Activated T-helper 1 cell treated with anti-CD3 and anti-CD28 coated beads, Interleukin-12 subunit alpha, Interleukin-12 subunit beta, Interleukin-2, Interleukin-4 antibody, amounts not matched to agents 30 ng/mL and 10 ng/mL and 1 ng/mL, durations not matched to agents 14 hours and 24 hours and 36 hours (primary cell): ENCODE measurements at regions of chr1 and their contacts with region 1.

Region 1: DNA sequence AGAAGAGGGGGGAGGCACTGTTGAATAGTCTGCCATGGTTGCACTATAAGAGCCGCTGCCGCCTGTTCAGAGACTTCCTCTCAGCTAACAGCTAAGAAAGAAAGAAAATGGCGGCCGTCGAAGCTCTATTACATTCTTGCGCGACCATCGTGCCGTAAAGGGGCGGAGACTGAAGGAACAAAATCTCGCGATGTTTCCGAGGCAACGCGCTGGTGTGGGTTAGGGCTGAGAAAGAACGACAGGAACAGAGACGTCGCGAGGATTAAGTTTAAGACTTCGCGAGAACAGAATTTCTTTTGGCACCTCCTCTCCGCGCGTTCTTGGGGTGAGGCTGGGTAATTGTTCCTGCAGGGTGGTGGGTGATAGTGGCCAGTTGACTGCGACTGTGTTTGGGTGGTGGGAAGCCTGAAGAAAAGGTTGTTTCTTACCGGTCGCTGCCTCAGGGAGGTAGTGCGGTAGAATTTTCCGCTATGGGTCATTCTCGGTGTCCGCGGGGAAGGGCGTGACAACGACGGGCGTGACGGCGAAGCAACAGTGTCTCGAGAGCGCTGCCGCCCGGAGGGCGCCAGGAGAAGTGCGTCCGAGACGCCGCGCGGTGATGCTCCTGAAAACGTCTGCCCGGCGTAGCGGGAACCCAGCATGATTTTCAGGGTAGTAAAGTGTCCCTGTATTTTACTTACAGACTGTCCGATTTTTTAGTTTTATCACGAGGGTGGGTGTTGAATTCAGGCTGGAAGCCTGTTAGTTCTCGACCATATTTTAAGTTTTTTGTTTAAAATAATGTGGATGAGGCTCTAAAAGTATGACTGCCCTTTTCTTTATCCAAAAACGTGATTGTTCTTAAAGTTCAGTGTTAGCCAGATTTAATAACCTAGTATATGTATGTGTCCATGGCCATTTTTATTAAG is at the start of gene FUBP1:
- DNase-seq: peak; percentile 96
- H3K4me3 Mint-ChIP-seq: no peak within 1 kb of the TSS
- H3K27ac Mint-ChIP-seq: no peak within 1 kb of the TSS
- H3K4me1 Mint-ChIP-seq: peaks cover 52% of the 10 kb centered on the region
- H3K27me3 Mint-ChIP-seq: no peaks in the 10 kb centered on the region
- total RNA-seq, gene FUBP1: 268 and 278 TPM in 2 replicates

Region 2: GRCh38 chr1:76269155-76269554 is 1710.1 kb before region 1 on chr1:
- intact Hi-C with region 1: loop called (anchors 10 kb)
- DNase-seq: no peak
- H3K4me3 Mint-ChIP-seq: peak overlapping the region; percentile 48
- H3K27ac Mint-ChIP-seq: peak overlapping the region; percentile 77
- H3K4me1 Mint-ChIP-seq: peaks cover 71% of the 10 kb centered on the region
- H3K27me3 Mint-ChIP-seq: no peaks in the 10 kb centered on the region

Region 3: GRCh38 chr1:77282866-77283539 is 696.2 kb before region 1 on chr1:
- intact Hi-C with region 1: no loop called
- DNase-seq: no peak
- H3K4me3 Mint-ChIP-seq: peak overlapping the region; percentile 59
- H3K27ac Mint-ChIP-seq: no peak overlapping the region
- H3K4me1 Mint-ChIP-seq: peaks cover 28% of the 10 kb centered on the region
- H3K27me3 Mint-ChIP-seq: peaks cover 20% of the 10 kb centered on the region

Region 4: GRCh38 chr1:77759071-77760028 is 219.9 kb before region 1 on chr1 and contains the start of gene USP33:
- intact Hi-C with region 1: loop called (anchors 1 kb)
- DNase-seq: peak; percentile 89
- H3K4me3 Mint-ChIP-seq: peak within 1 kb of the TSS; percentile 92
- H3K27ac Mint-ChIP-seq: peak within 1 kb of the TSS; percentile 88
- H3K4me1 Mint-ChIP-seq: peaks cover 28% of the 10 kb centered on the region
- H3K27me3 Mint-ChIP-seq: peaks cover 2% of the 10 kb centered on the region
- total RNA-seq, gene USP33: 49.9 and 53.1 TPM in 2 replicates

Region 5: DNA sequence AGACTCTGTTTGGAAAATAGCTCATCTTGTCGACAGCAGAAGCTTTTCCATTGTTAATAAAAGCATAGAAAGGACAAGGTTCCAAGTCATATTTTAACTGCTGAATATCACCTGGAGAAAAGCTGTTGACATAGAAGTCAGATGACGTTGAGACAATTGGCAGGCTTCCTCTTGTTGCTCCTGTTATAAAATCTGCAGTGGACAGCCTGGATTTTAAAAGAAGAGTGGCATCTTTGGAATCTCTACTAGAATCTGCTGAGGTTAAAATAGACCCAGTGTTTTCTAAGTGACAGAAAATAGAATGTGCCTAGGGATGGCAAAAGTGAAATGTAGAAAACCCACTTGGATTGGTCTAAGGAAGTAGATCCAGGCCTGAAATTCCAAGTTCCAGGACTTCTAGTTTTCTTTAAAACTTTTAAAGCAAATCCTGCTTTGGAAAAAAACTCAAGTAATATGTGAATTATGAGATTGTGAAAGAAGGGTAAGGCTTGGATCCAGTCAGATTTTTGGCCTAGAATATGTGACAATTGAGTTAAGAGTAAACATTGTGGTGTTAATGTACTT is 144.4 kb before region 1 on chr1:
- intact Hi-C with region 1: no loop called
- DNase-seq: no peak
- H3K4me3 Mint-ChIP-seq: no peak overlapping the region
- H3K27ac Mint-ChIP-seq: no peak overlapping the region
- H3K4me1 Mint-ChIP-seq: no peaks in the 10 kb centered on the region
- H3K27me3 Mint-ChIP-seq: no peaks in the 10 kb centered on the region

Region 6: DNA sequence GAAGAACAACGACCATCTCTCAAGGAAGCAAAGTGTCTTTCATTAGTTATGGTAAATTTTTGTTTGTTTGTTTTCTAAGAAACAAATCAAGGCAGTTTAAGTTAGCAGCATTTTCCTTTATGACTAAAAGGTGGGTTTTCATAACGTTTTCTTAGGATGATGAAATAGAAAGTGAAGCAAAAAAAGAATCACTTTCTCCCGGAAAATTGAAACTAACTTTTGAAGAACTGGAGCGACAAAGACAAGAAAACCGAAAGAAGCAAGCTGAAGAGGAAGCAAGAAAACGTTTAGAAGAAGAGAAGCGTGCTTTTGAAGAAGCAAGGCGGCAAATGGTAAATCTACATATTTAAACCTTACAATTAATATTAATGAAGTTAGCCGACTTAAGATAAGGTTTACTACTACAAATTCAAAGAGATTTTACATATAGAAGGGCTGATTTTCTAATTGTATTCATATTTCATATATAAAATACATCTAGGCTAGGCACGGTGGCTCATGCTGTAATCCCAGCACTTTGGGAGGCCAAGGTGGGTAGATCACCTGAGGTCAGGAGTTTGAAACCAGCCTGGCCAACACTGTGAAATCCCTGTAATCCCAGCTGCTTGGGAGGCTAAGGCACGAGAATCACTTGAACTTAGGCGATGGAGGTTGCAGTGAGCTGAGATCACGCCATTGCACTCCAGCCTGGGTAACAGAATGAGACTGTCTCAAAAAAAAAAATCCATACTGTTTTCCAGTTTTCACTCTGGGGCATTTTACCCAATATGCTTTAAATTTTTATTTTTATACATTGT is 52.5 kb before region 1 on chr1:
- intact Hi-C with region 1: loop called (anchors 2 kb)
- DNase-seq: no peak
- H3K4me3 Mint-ChIP-seq: peak overlapping the region; percentile 68
- H3K27ac Mint-ChIP-seq: peak overlapping the region; percentile 41
- H3K4me1 Mint-ChIP-seq: peaks cover 5% of the 10 kb centered on the region
- H3K27me3 Mint-ChIP-seq: peaks cover 1% of the 10 kb centered on the region

Region 7: DNA sequence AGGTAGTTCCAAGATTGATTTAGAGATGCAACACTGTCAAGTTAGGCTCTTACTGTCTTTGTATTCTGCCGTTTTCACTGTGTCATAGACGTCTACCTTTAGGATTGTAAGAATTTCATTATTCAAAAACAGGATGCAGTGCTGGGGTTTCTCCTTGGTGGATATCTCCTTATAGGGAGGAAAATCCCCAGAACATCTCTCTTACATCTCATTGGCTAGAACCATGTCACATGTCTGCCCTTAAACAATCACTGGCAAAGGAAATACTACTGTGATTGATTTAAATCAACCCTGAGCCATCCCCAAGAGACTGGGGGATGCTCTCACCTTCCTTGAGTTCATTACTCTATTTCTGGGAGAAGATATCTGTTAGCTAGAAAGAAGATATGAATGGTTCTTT is 10.5 kb after region 1 on chr1:
- intact Hi-C with region 1: loop called (anchors 1 kb)
- DNase-seq: no peak
- H3K4me3 Mint-ChIP-seq: no peak overlapping the region
- H3K27ac Mint-ChIP-seq: no peak overlapping the region
- H3K4me1 Mint-ChIP-seq: peaks cover 31% of the 10 kb centered on the region
- H3K27me3 Mint-ChIP-seq: no peaks in the 10 kb centered on the region

Region 8: DNA sequence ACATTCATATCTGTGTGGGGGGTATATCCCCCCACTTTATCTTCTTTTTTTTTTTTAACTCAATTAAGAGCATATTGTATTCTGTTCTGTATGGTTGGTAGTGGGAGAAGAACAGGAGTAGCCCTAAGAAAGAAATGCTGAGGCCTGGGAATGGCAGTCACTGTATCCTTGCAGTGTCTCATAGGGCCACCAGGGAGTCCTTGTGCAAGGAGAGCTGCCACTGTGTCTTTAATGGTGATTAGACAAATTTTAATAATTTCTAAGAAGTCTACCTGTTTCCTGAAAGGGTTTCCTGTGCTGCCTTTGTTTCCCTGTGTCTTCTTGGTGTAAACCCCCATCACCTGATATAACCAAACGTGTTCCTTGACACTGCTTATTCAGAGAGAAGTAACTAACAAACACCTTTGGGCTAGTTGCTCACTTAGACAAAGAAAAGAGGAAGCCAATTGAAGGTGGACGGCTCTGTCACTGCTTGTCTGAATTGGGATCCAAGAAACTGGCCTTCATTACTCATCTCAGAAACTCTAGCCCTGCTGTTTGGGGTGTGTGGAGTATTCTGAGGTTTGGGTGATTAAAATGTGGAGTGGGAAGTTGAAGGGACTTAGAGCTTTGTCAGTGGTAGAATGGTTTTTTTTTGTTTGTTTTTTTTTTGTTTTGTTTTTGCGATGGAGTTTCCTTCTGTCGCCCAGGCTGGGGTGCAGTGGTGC is 81.8 kb after region 1 on chr1:
- intact Hi-C with region 1: no loop called
- DNase-seq: no peak
- H3K4me3 Mint-ChIP-seq: no peak overlapping the region
- H3K27ac Mint-ChIP-seq: no peak overlapping the region
- H3K4me1 Mint-ChIP-seq: no peaks in the 10 kb centered on the region
- H3K27me3 Mint-ChIP-seq: peaks cover 5% of the 10 kb centered on the region

Region 9: DNA sequence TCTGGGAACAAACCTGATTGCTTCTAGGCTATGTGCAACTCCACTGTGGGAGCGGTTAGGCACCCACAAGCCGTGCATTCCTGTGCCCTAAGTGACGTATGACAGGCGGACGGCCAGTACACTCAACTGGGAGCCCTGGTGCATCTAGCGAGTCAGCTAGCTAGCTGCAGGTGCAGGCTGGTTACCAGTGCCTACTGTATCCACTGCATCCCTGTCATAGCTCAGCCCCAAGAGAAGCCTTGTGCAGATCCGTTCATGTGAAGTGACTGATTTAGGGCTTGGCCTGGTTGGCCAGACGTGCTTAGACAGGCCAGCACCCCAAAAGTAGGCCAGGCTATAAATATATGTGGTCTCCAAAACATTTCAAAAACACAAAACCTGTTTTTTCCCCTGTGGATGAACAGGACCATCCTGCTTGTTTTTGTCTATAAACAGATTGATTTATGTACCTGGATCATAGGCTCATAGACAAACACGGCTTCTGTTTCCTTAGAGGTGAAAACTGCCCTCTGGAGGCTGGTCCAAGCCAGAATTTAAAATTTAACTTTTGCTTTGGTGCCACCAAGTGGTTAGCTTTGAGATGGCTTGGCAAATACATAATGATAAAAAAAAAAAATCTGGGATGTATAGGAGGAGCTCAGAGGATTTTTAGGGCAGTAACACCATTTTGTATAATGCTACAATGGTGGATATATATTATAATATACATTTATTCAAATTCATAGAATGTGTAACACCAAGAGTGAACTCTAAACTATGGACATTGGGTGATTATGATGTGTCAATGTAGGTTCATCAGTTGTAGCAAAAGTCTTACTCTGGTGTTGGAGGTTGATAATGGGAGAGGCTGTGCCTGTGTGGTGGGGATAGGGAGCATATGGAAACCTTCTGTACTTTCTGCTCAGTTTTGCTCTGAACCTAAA is 135.1 kb after region 1 on chr1:
- intact Hi-C with region 1: loop called (anchors 1 kb)
- DNase-seq: peak; percentile 45
- H3K4me3 Mint-ChIP-seq: no peak overlapping the region
- H3K27ac Mint-ChIP-seq: no peak overlapping the region
- H3K4me1 Mint-ChIP-seq: no peaks in the 10 kb centered on the region
- H3K27me3 Mint-ChIP-seq: no peaks in the 10 kb centered on the region